Dorsolateral prefrontal cortex (tissue), 120 donors: ENCODE measurements at regions of chr5 and their contacts with region 1.

Region 1: GRCh38 chr5:146878476-146879172 is at the start of gene PPP2R2B:
- DNase-seq: peak; percentile 45 to 88 (median 74)
- H3K4me3 ChIP-seq: peak within 1 kb of the TSS; percentile 53 to 82 (median 68)
- H3K27ac ChIP-seq: peak within 1 kb of the TSS in 58 of 59 donors; percentile 35 to 94 (median 85)
- H3K27me3 ChIP-seq: no peaks in the 10 kb centered on the region
- CTCF ChIP-seq: peak in 1 of 56 donors; percentile 29
- total RNA-seq, gene PPP2R2B: 125 to 253 (median 180) TPM

Region 2: GRCh38 chr5:146947181-146947941 is 68.7 kb after region 1 on chr5:
- intact Hi-C with region 1: loop called in 1 of 2 experiments (anchors 5 kb)
- DNase-seq: peak in 1 of 10 donors; percentile 17
- H3K4me3 ChIP-seq: no peak overlapping the region
- H3K27ac ChIP-seq: peak overlapping the region in 1 of 59 donors; percentile 43
- H3K27me3 ChIP-seq: no peaks in the 10 kb centered on the region
- CTCF ChIP-seq: peak in 53 of 56 donors; percentile 16 to 61 (median 45)

Region 3: GRCh38 chr5:147055850-147056566 is 177.4 kb after region 1 on chr5:
- intact Hi-C with region 1: no loop called
- DNase-seq: peak in 7 of 10 donors; percentile 38 to 63 (median 46)
- H3K4me3 ChIP-seq: peak overlapping the region; percentile 7 to 64 (median 48)
- H3K27ac ChIP-seq: peak overlapping the region; percentile 2 to 91 (median 80)
- H3K27me3 ChIP-seq: no peaks in the 10 kb centered on the region
- CTCF ChIP-seq: peak in 1 of 56 donors; percentile 10